Caco-2 (cell line): ENCODE measurements at regions of chr4 and their contacts with region 1.

Region 1: GRCh38 chr4:89836897-89837384 is at the start of gene SNCA:
- DNase-seq: peak; percentile 67 to 75
- H3K4me3 ChIP-seq: peak within 1 kb of the TSS; percentile 52
- H3K4me3 Mint-ChIP-seq: peak within 1 kb of the TSS; percentile 84
- H3K27ac Mint-ChIP-seq: no peak within 1 kb of the TSS
- H3K4me1 ChIP-seq: no peaks in the 10 kb centered on the region
- H3K4me1 Mint-ChIP-seq: peaks cover 9% of the 10 kb centered on the region
- H3K27me3 ChIP-seq: no peaks in the 10 kb centered on the region
- H3K27me3 Mint-ChIP-seq: peaks cover 12% of the 10 kb centered on the region
- CTCF ChIP-seq: no peak
- total RNA-seq, gene SNCA: 5.7 and 8.4 TPM in 2 replicates

Region 2: DNA sequence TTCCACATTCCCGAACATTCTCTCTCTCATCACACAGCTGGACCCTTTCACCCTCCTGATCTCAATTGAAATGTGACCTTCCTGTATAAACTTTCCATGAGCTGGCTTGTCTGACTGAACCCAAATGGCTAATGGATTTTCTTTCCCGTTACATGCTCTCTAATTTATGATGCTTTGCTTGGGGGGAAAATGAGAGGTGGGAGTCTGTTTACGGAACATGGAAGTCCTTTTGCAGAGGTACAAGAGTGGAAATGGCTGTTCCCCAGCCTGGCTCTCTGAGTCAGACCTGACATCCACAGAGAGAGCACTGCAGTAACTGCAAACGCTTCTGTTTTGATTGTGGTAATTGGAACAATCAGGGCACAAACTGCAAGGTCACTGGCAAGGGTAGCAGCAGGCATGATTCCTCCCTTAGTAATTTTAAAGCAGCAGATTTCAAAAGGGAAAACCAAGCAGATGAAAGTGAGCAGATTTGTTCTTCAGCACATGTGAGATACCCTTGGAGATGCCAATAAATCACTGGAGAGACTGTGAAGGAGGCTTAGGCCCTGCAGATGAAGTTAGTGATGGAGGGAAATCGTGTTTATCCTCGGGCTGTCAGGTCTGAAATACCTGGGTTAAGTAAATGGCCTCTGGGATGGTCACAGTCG is 83.9 kb before region 1 on chr4:
- CTCF ChIA-PET with region 1: no interaction called
- POLR2A ChIA-PET with region 1: no interaction called
- intact Hi-C with region 1: loop called (anchors 10 kb)
- DNase-seq: peak in 1 of 2 experiments; percentile 43
- H3K4me3 ChIP-seq: no peak overlapping the region
- H3K4me3 Mint-ChIP-seq: peak overlapping the region; percentile 9
- H3K27ac Mint-ChIP-seq: peak overlapping the region; percentile 8
- H3K4me1 ChIP-seq: peaks cover 11% of the 10 kb centered on the region
- H3K4me1 Mint-ChIP-seq: peaks cover 15% of the 10 kb centered on the region
- H3K27me3 ChIP-seq: no peaks in the 10 kb centered on the region
- H3K27me3 Mint-ChIP-seq: no peaks in the 10 kb centered on the region
- CTCF ChIP-seq: no peak

Region 3: GRCh38 chr4:90274175-90274574 is 437.2 kb after region 1 on chr4:
- CTCF ChIA-PET with region 1: no interaction called
- POLR2A ChIA-PET with region 1: no interaction called
- intact Hi-C with region 1: no loop called
- DNase-seq: no peak
- H3K4me3 ChIP-seq: no peak overlapping the region
- H3K4me3 Mint-ChIP-seq: no peak overlapping the region
- H3K27ac Mint-ChIP-seq: no peak overlapping the region
- H3K4me1 ChIP-seq: peaks cover 14% of the 10 kb centered on the region; the same call in 1 of the 2 replicates
- H3K4me1 Mint-ChIP-seq: peaks cover 7% of the 10 kb centered on the region
- H3K27me3 ChIP-seq: no peaks in the 10 kb centered on the region
- H3K27me3 Mint-ChIP-seq: no peaks in the 10 kb centered on the region
- CTCF ChIP-seq: no peak